Breast epithelium (tissue), 4 donors: ENCODE measurements at regions of chr13 and their contacts with region 1.

Region 1: DNA sequence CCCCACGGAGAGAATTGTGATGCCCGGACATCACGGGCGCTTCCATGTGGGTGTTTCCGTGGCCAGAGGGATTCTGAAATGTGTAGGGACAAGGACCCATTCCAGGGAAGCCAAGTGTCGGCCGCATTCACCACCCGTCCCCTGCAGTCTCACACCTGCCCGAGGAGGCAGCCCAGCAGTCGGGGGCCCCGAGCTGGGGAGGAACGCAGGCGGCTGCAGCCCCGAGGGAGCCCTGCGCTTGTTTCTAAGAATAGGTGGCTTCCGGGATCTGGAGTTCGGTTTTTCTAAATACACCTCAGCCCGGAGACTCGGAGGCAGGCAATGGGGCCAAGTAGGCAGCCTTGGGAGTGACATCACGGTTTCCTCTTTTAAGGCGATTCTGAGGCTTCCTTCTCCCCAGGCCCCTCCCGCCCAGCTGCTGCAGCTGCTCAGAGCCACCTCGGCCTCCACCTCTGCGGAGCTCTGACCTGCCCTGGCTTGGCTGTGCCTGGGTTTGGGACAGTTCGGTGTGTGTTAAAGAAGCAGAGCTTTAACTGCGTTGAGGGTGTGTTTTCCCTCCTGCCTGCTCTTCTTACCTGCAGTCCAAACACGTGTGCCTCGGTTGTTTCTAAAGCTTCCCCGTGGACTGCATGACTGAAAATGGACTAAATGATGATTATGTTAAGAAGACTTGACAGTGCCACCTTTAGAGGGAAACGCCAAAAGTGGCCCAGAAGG is 80.5 kb downstream of the COL4A2 start:
- DNase-seq: peak in 1 of 2 donors; percentile 64
- H3K4me3 ChIP-seq: peak overlapping the region; percentile 7 to 58 (median 30)
- H3K27ac ChIP-seq: peak overlapping the region; percentile 77 to 79
- H3K4me1 ChIP-seq: peaks cover 0 to 4% of the 10 kb centered on the region in 2 donors
- H3K27me3 ChIP-seq: no peaks in the 10 kb centered on the region
- CTCF ChIP-seq: no peak
- POLR2A ChIP-seq: no peak

Region 2: DNA sequence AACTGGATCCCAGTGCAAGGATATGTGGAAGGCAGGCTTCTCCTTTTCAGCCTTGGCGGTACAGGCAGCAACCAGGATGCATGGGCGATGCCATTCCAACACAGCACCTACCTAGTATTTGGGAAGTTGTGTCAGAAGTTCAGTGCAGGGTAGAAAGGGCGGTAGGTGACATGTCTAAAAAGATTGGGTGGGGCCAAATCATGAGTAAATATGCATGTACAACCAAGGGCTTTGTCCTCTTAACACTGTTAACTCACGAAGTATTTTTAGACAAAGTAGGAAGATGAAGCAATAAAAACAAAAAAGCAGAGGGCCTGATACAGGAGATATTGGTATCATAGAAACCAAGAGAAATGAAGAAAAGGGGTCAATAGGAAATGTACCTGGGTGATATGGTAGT is 1366.0 kb before region 1 on chr13:
- intact Hi-C with region 1: no loop called
- DNase-seq: no peak
- H3K4me3 ChIP-seq: no peak overlapping the region
- H3K27ac ChIP-seq: no peak overlapping the region
- H3K4me1 ChIP-seq: no peaks in the 10 kb centered on the region
- H3K27me3 ChIP-seq: no peaks in the 10 kb centered on the region
- CTCF ChIP-seq: no peak
- POLR2A ChIP-seq: no peak

Region 3: GRCh38 chr13:110371550-110372465 is 15.7 kb before region 1 on chr13:
- intact Hi-C with region 1: loop called (anchors 1 kb)
- DNase-seq: no peak
- H3K4me3 ChIP-seq: peak overlapping the region in 1 of 3 donors; percentile 40
- H3K27ac ChIP-seq: peak overlapping the region; percentile 78 to 87
- H3K4me1 ChIP-seq: no peaks in the 10 kb centered on the region
- H3K27me3 ChIP-seq: no peaks in the 10 kb centered on the region
- CTCF ChIP-seq: no peak
- POLR2A ChIP-seq: no peak